Pancreas (tissue), 10 donors: ENCODE measurements at regions of chr1 and their contacts with region 1.

Region 1: GRCh38 chr1:147627435-147628110 is 42.8 kb downstream of the ACP6 start:
- DNase-seq: peak in 3 of 6 donors; percentile 54 to 74 (median 68)
- ATAC-seq: peak; percentile 66 to 93 (median 91)
- H3K4me3 ChIP-seq: no peak overlapping the region
- H3K27ac ChIP-seq: no peak overlapping the region
- H3K4me1 ChIP-seq: no peaks in the 10 kb centered on the region
- H3K27me3 ChIP-seq: no peaks in the 10 kb centered on the region
- CTCF ChIP-seq: peak; percentile 75 to 90 (median 82)

Region 2: GRCh38 chr1:147494998-147495580 is 132.5 kb before region 1 on chr1:
- intact Hi-C with region 1: loop called in 1 of 3 experiments (anchors 10 kb)
- DNase-seq: peak; percentile 45 to 66 (median 52)
- ATAC-seq: peak; percentile 67 to 98 (median 95)
- H3K4me3 ChIP-seq: no peak overlapping the region
- H3K27ac ChIP-seq: no peak overlapping the region
- H3K4me1 ChIP-seq: no peaks in the 10 kb centered on the region
- H3K27me3 ChIP-seq: no peaks in the 10 kb centered on the region
- CTCF ChIP-seq: peak; percentile 44 to 80 (median 78)

Region 3: GRCh38 chr1:147509786-147510395 is 117.7 kb before region 1 on chr1:
- intact Hi-C with region 1: loop called in 1 of 3 experiments (anchors 5 kb)
- DNase-seq: no peak
- ATAC-seq: no peak
- H3K4me3 ChIP-seq: no peak overlapping the region
- H3K27ac ChIP-seq: no peak overlapping the region
- H3K4me1 ChIP-seq: peaks cover 0 to 3% (median 0%) of the 10 kb centered on the region in 3 donors
- H3K27me3 ChIP-seq: no peaks in the 10 kb centered on the region
- CTCF ChIP-seq: no peak

Region 4: DNA sequence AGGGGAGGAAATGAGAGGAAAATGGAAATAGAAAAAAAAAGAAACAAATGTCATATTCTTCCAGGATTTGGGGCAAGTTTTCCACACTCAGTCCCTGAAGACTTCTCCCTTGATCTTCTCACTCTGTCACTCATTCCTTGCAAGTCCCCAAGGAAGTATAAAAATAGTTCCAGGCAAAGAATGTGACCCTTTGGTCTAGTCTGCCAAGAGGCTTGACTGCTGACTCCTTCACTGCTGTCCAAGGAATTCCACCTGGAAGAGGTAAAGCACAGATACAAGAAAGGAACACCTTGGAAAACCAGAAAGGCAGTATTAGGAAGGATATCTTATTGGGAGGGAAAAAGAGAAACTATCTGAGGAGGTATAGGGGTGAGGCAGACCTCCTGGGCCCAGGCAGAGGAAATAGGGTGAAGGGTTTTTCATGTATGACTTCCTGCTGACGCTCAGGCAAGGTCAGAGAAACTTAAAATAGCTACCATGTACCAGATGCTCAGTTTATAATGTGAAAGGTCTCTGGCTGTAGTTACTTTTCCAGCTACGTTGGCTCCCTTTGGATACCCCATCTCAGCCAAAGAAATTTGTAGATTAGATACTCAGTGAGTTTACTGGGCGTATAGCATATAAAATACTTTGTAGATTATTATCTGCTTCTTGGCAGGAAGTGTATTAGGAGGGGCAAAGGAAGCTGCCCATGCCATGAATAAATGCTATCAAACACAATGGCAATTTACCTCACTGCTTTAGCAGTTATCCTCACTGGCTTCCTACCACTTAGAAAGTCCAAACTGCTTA is 134.9 kb after region 1 on chr1:
- intact Hi-C with region 1: no loop called
- DNase-seq: no peak
- ATAC-seq: peak in 1 of 4 donors; percentile 29
- H3K4me3 ChIP-seq: no peak overlapping the region
- H3K27ac ChIP-seq: no peak overlapping the region
- H3K4me1 ChIP-seq: no peaks in the 10 kb centered on the region
- H3K27me3 ChIP-seq: no peaks in the 10 kb centered on the region
- CTCF ChIP-seq: no peak